Panc1 (cell line): ENCODE measurements at regions of chr10 and their contacts with region 1.

Region 1: DNA sequence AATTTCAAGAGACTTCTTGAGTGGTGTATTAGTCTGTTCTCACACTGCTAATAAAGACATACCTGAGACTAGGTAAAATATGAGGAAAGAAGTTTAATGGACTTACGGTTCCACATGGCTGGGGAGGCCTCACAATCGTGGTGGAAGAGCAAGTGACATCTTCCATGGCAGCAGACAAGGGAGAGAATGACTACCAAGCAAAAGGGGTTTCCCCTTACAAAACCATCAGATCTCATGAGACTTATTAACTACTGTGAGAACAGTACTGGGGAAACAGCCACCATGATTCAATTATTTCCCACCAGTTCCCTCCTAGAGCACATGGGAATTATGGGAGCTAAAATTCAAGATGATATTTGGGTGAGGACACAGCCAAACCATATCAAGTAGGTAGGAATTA is 150.5 kb downstream of the PCDH15 start:
- DNase-seq: no peak
- ATAC-seq: no peak
- H3K4me3 ChIP-seq: no peak overlapping the region
- H3K27ac ChIP-seq: no peak overlapping the region
- H3K4me1 ChIP-seq: no peaks in the 10 kb centered on the region
- H3K27me3 ChIP-seq: no peaks in the 10 kb centered on the region
- CTCF ChIP-seq: no peak

Region 2: GRCh38 chr10:54139819-54140428 is 510.6 kb before region 1 on chr10:
- CTCF ChIA-PET with region 1: interaction called, 11 read pairs
- POLR2A ChIA-PET with region 1: no interaction called
- in situ Hi-C with region 1: no loop called
- intact Hi-C with region 1: no loop called
- DNase-seq: no peak
- ATAC-seq: no peak
- H3K4me3 ChIP-seq: no peak overlapping the region
- H3K27ac ChIP-seq: no peak overlapping the region
- H3K4me1 ChIP-seq: no peaks in the 10 kb centered on the region
- H3K27me3 ChIP-seq: no peaks in the 10 kb centered on the region
- CTCF ChIP-seq: no peak

Region 3: DNA sequence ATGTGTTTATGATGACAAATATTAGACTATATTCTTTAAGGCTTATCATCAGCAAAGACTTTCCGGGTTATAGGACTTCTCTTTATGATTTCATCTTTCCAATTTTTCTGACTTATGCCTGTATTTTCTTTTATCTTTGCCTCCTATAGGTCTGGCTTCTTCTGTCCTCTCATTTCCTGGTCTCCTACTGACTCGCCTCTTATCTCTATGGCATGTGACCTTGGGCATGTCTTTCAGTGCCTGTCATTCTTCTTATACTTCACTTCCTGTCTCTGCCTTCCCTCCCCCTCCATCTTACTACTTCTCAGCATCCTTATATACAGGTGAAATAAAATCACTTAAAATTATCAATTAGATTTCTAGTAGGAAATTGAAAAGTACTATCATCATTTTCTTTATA is 108.2 kb after region 1 on chr10:
- CTCF ChIA-PET with region 1: no interaction called
- POLR2A ChIA-PET with region 1: no interaction called
- in situ Hi-C with region 1: no loop called
- intact Hi-C with region 1: no loop called
- DNase-seq: no peak
- ATAC-seq: no peak
- H3K4me3 ChIP-seq: no peak overlapping the region
- H3K27ac ChIP-seq: no peak overlapping the region
- H3K4me1 ChIP-seq: no peaks in the 10 kb centered on the region
- H3K27me3 ChIP-seq: no peaks in the 10 kb centered on the region
- CTCF ChIP-seq: no peak